Esophagus muscularis mucosa (tissue), 4 donors: ENCODE measurements at regions of chr9 and their contacts with region 1.

Region 1: DNA sequence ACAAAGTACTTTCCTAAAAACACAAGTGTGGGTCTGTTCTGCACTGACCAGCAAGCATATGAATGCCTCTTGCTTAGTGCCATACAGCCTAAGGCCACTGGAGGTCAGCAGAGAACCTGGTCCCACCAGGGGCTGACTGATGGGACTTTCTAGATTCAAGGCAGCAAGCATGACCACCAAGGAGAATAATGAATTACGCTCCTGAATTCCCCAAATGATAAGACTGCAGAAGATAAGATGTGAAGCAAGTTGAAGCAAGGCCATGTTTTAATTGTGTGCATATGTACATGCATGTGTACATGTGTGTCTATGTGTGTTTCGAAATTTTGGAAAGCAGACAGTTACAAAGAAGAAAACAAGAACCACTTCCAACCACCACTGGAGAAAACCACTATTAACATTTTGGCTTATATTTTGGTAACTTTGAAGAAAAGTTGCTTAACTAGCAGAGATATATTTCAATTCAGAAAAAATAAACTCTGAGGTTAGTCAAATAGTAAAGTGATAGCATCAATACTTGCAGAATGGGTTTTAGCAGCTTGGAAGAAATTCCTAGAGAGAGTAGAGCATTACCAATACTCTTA is 70.5 kb downstream of the ERP44 start:
- DNase-seq: no peak
- H3K4me3 ChIP-seq: no peak overlapping the region
- H3K27ac ChIP-seq: no peak overlapping the region
- H3K4me1 ChIP-seq: no peaks in the 10 kb centered on the region
- H3K27me3 ChIP-seq: no peaks in the 10 kb centered on the region
- CTCF ChIP-seq: peak; percentile 80 to 92 (median 82)
- EP300 ChIP-seq: no peak
- POLR2A ChIP-seq: no peak

Region 2: GRCh38 chr9:100108559-100108958 is 80.3 kb after region 1 on chr9:
- intact Hi-C with region 1: no loop called
- DNase-seq: no peak
- H3K4me3 ChIP-seq: no peak overlapping the region
- H3K27ac ChIP-seq: no peak overlapping the region
- H3K4me1 ChIP-seq: peaks cover 7 to 18% (median 17%) of the 10 kb centered on the region in 4 donors
- H3K27me3 ChIP-seq: no peaks in the 10 kb centered on the region
- CTCF ChIP-seq: no peak
- EP300 ChIP-seq: no peak
- POLR2A ChIP-seq: no peak

Region 3: DNA sequence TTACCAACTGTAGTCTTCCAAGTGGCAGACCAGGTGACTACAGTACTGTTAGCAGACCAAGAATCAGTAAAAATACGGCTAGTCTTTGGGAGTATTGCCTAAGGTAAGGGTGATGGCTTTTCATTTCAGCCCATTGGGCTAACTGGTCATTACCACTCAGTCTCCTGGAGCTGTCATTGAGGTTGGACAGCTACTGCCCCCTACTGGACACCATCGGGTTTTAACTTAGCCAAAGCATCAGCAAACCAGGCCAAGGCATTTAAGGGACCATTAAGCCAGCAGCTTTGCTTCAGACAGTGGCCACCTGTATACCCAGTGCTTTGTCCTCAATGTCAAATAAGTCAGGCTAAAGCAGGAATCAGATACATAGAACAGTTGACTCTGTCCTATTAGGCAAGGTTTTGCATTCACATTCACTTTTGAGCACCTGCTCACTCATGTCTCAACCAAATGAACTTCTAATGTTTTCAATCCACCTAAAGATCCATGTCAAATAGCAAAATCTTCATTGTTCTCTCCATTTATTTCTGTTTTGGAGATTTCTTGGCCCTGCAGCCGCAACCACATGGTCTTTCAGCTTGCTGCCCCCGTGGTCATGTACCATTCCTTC is 188.0 kb after region 1 on chr9:
- intact Hi-C with region 1: loop called (anchors 5 kb)
- DNase-seq: no peak
- H3K4me3 ChIP-seq: no peak overlapping the region
- H3K27ac ChIP-seq: no peak overlapping the region
- H3K4me1 ChIP-seq: peaks cover 0 to 4% (median 1%) of the 10 kb centered on the region in 4 donors
- H3K27me3 ChIP-seq: no peaks in the 10 kb centered on the region
- CTCF ChIP-seq: peak in 2 of 3 experiments; percentile 21 to 55
- EP300 ChIP-seq: no peak
- POLR2A ChIP-seq: no peak